Mammary epithelial cell (primary cell): ENCODE measurements at regions of chr9 and their contacts with region 1.

Region 1: GRCh38 chr9:31304576-31304975 is 1079.9 kb upstream of the ACO1 start:
- DNase-seq: peak; percentile 93
- H3K4me3 ChIP-seq: peak overlapping the region in 1 of 3 experiments; percentile 22
- H3K27ac ChIP-seq: peak overlapping the region; percentile 97
- H3K4me1 ChIP-seq: peaks cover 5% of the 10 kb centered on the region
- H3K27me3 ChIP-seq: no peaks in the 10 kb centered on the region
- CTCF ChIP-seq: no peak

Region 2: GRCh38 chr9:31140316-31140715 is 164.3 kb before region 1 on chr9:
- CTCF ChIA-PET with region 1: no interaction called
- dilution Hi-C with region 1: no loop called
- in situ Hi-C with region 1: no loop called
- intact Hi-C with region 1: loop called (anchors 1 kb)
- DNase-seq: peak; percentile 68
- H3K4me3 ChIP-seq: no peak overlapping the region
- H3K27ac ChIP-seq: no peak overlapping the region
- H3K4me1 ChIP-seq: peaks cover 23% of the 10 kb centered on the region
- H3K27me3 ChIP-seq: no peaks in the 10 kb centered on the region
- CTCF ChIP-seq: peak; percentile 29 to 50

Region 3: GRCh38 chr9:31272456-31273295 is 31.9 kb before region 1 on chr9:
- CTCF ChIA-PET with region 1: no interaction called
- dilution Hi-C with region 1: no loop called
- in situ Hi-C with region 1: no loop called
- intact Hi-C with region 1: loop called (anchors 1 kb)
- DNase-seq: peak; percentile 93
- H3K4me3 ChIP-seq: no peak overlapping the region
- H3K27ac ChIP-seq: peak overlapping the region; percentile 74
- H3K4me1 ChIP-seq: peaks cover 10% of the 10 kb centered on the region
- H3K27me3 ChIP-seq: no peaks in the 10 kb centered on the region
- CTCF ChIP-seq: no peak

Region 4: GRCh38 chr9:31323726-31324444 is 19.3 kb after region 1 on chr9:
- CTCF ChIA-PET with region 1: no interaction called
- dilution Hi-C with region 1: no loop called
- in situ Hi-C with region 1: no loop called
- intact Hi-C with region 1: no loop called
- DNase-seq: peak; percentile 5
- H3K4me3 ChIP-seq: no peak overlapping the region
- H3K27ac ChIP-seq: no peak overlapping the region
- H3K4me1 ChIP-seq: no peaks in the 10 kb centered on the region
- H3K27me3 ChIP-seq: no peaks in the 10 kb centered on the region
- CTCF ChIP-seq: no peak

Region 5: GRCh38 chr9:31597977-31598376 is 293.4 kb after region 1 on chr9:
- CTCF ChIA-PET with region 1: no interaction called
- dilution Hi-C with region 1: no loop called
- in situ Hi-C with region 1: no loop called
- intact Hi-C with region 1: loop called (anchors 5 kb)
- DNase-seq: peak; percentile 90
- H3K4me3 ChIP-seq: peak overlapping the region in 1 of 3 experiments; percentile 13
- H3K27ac ChIP-seq: peak overlapping the region; percentile 55
- H3K4me1 ChIP-seq: peaks cover 16% of the 10 kb centered on the region
- H3K27me3 ChIP-seq: no peaks in the 10 kb centered on the region
- CTCF ChIP-seq: no peak

Region 6: DNA sequence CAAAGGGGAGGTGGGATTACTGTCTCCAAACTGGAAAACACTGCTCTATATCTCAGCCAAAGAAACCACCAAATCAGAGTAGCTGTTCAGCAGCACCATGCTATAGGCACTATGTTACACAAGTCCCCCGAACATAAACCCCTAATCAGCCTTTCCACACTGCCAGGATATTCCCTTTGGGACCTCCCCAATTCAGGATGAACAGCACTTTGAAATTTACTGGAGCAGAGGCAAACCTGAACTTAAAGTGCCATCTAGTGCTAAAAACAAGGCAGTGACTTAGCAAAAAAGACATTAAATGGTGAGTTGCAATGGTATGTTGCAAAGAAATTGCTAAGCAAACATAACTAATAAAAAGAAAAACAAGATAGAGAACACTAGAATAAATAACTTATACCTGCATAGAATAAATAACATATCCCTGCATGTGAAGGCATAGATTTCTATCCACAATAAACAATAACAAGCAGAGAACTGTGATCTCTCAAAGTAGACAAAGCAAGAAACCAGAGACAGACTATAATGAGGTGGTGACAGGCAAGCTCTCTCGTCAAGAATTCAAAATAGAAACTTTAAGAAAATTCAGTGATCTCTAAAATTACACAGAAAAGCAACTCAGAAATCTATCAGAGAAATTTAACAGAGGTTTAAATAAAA is 495.5 kb after region 1 on chr9:
- CTCF ChIA-PET with region 1: interaction called, 5 read pairs
- dilution Hi-C with region 1: no loop called
- in situ Hi-C with region 1: no loop called
- intact Hi-C with region 1: loop called (anchors 1 kb)
- DNase-seq: peak; percentile 41
- H3K4me3 ChIP-seq: no peak overlapping the region
- H3K27ac ChIP-seq: no peak overlapping the region
- H3K4me1 ChIP-seq: no peaks in the 10 kb centered on the region
- H3K27me3 ChIP-seq: no peaks in the 10 kb centered on the region
- CTCF ChIP-seq: peak; percentile 73 to 78